Posterior vena cava (tissue), 2 donors: ENCODE measurements at regions of chr3 and their contacts with region 1.

Region 1: GRCh38 chr3:183917776-183918175 is 33.1 kb upstream of the PARL start:
- DNase-seq: no peak

Region 2: DNA sequence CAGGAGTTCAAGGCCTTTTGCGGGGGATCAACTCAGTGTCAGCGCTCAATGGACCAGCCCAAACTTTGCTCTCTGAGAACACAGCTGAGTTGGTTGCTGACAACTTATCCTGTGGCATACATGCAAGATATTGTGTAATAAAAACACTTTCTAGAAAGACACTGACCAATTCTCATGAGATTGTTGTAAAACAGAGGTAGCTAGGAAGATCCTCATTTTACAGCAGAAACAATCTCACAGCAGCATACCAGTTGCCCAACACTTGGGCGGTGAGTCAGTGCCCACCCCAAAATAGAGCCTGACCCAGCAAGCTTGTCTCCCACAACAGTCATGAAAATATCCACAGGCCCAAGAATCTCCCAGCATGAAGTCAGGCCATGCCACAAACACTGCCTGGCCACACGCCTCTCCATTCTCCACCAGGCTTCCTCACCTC is 380.5 kb before region 1 on chr3:
- intact Hi-C with region 1: no loop called
- DNase-seq: peak; percentile 85

Region 3: DNA sequence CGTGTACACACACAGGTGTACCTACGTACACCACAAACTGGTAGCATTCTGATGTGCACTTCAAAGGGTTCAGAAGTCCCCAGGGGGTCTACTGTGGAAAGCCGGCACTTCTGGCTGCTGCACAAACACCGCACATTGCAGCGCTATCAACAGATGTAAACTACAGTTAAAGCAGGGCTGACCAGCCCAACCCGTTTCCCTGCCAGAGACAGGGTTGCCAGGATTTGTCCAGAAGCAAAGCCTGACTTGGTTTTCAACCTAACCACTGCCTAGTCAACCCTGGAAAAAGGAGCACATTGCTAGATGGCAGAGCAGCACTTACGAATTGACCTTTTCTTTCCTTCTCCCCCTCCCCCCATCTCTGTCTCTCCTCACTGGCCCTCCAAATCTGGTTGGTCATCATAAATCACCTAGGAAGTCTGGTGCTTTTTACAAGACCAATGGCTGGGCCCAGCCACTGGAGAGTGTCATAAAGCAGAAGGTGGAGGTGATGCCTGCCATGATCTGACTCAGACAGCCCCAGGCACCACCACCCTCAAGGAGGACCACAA is 48.5 kb after region 1 on chr3:
- intact Hi-C with region 1: no loop called
- DNase-seq: no peak

Region 4: DNA sequence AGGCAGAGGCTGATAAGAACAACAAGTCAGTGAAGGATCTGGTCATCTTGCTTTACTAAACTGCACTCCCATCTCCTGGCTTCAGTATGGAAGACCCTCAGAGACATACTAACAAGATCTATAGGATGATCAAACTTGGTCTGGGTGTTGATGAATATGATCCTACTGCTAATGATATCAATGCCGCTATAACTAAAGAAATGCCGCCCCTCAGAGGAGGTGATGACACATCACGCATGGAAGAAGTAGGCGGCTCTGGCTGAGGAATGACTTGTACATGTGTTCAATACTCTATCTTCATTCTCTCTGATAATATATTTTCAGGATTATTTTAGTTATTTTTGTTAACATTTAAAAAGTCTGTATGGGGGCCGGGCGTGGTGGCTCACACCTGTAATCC is 199.9 kb after region 1 on chr3:
- intact Hi-C with region 1: loop called in 1 of 2 experiments (anchors 2 kb)
- DNase-seq: no peak